A673 (cell line): ENCODE measurements at regions of chr3 and their contacts with region 1.

Region 1: DNA sequence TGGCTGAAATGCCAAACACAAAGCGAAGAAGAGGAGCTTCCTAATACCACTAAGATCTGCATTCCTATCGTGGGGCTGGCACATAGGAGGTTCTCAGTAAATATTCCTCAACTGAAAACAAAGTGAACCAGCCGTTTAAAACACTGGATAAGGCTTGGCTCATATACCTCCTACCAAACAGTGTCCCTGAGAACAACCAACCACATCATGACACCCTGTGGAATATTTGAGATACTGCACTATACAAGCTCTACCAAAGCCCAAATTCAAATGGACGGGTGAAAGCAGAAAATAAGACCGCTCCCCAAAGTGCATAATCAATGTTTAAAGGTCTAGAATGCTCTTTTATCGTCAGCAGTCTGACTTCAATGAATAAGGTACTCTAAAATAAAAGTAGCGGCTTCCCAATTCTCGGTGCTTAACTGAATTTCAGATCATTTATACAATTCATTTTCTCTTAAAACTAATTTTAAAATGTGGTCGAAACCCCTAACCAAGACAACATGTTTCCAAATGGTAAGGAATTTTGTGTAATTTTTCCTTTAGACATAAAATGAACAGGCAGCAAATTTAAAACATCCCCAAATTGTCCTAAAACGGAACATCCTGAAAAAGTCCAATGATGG is 425.8 kb downstream of the ERC2 start:
- DNase-seq: peak; percentile 63
- H3K4me3 ChIP-seq: no peak overlapping the region
- H3K27ac ChIP-seq: no peak overlapping the region
- H3K4me1 ChIP-seq: peaks cover 8% of the 10 kb centered on the region
- H3K27me3 ChIP-seq: no peaks in the 10 kb centered on the region
- CTCF ChIP-seq: peak; percentile 61

Region 2: GRCh38 chr3:55897573-55898224 is 144.7 kb before region 1 on chr3:
- CTCF ChIA-PET with region 1: no interaction called
- POLR2A ChIA-PET with region 1: no interaction called
- intact Hi-C with region 1: loop called (anchors 10 kb)
- DNase-seq: peak; percentile 21
- H3K4me3 ChIP-seq: no peak overlapping the region
- H3K27ac ChIP-seq: no peak overlapping the region
- H3K4me1 ChIP-seq: peaks cover 21% of the 10 kb centered on the region
- H3K27me3 ChIP-seq: no peaks in the 10 kb centered on the region
- CTCF ChIP-seq: peak; percentile 43

Region 3: DNA sequence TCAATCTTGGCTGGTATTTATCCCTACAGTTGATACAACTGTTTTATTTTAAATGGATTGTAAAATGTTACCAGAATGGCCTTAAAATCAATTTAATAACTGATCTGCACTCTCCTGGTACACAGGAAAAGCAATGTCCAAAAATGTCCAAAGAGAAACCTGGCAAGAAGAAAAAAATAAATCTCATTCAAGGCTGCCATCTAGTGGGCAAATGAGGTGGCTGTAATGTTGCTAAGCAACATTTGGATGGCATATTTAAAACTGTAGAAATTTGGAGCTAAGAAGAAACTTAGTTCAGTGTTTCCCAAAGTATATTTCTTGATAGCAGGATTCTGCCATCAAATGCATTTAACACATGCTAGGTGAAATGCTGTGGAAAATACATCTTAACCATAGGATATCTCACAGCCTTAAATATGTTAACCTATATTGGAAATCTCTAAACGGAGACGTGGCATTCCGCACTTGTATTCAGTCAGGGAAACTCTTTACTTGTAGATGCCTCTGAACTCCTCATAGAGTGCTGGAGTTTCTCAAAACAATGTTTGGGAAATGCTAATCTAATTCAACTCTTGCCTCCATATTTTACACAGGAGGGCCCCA is 209.0 kb after region 1 on chr3:
- CTCF ChIA-PET with region 1: no interaction called
- POLR2A ChIA-PET with region 1: no interaction called
- intact Hi-C with region 1: loop called (anchors 5 kb)
- DNase-seq: peak; percentile 41
- H3K4me3 ChIP-seq: no peak overlapping the region
- H3K27ac ChIP-seq: no peak overlapping the region
- H3K4me1 ChIP-seq: no peaks in the 10 kb centered on the region
- H3K27me3 ChIP-seq: no peaks in the 10 kb centered on the region
- CTCF ChIP-seq: peak; percentile 64